ENCODE measurements at regions of chr3 and their contacts with region 1.

Region 1: DNA sequence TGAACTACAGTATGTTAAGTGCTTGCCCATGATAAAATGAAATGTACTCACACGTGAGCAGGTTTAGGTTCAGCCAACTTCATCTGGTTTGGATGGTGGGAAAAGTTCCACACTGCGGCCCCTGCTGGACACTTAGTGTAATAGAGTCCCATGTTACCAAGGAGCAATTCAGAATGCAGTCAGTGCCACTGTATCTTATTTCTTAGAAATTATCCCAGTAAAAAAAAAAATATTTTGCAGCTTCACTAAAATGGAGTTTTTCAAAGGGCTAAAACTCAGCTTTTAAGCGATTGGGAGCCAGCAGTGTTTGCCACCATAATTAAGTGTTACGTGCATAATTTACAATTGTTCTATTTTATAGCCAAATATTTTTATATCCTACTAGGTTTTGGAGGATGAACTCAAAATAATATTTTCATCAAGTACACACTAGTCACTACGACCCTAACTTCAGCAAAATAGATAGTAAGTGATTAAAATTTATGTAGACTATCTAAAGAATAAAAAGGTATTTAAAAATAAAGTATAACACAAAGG is 371.7 kb upstream of the GBE1 start:
- DNase-seq: peak; percentile 58 to 83
- ATAC-seq: peak; percentile 86
- H3K4me3 ChIP-seq: no peak overlapping the region
- H3K27ac ChIP-seq: no peak overlapping the region
- H3K4me1 ChIP-seq: no peaks in the 10 kb centered on the region
- H3K27me3 ChIP-seq: no peaks in the 10 kb centered on the region

Region 2: DNA sequence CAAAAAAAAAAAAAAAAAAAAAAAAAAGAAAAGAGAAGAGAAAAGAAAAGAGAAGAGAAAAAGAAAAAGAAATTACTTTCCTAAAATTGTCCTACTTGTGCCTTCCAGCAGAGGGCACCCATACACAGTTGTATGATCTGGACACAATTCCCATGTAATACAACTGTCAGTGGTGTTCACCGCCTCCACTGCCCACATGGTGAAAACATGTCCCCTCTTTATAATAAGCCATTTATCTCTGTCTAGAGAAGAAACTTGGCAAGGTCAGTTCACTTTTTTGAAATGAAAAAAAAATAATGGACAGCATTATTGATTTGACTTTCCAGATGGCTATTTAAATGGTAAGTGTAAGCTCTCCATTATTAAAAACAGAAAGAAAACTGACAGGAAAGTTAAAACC is 831.1 kb before region 1 on chr3:
- intact Hi-C with region 1: loop called (anchors 5 to 10 kb)
- DNase-seq: no peak
- ATAC-seq: peak; percentile 70
- H3K4me3 ChIP-seq: no peak overlapping the region
- H3K27ac ChIP-seq: no peak overlapping the region
- H3K4me1 ChIP-seq: no peaks in the 10 kb centered on the region
- H3K27me3 ChIP-seq: no peaks in the 10 kb centered on the region

Region 3: GRCh38 chr3:81419228-81419627 is 713.9 kb before region 1 on chr3:
- intact Hi-C with region 1: loop called in 1 of 2 experiments (anchors 10 kb)
- DNase-seq: no peak
- ATAC-seq: no peak
- H3K4me3 ChIP-seq: no peak overlapping the region
- H3K27ac ChIP-seq: no peak overlapping the region
- H3K4me1 ChIP-seq: no peaks in the 10 kb centered on the region
- H3K27me3 ChIP-seq: no peaks in the 10 kb centered on the region

Region 4: GRCh38 chr3:81666493-81667121 is 466.5 kb before region 1 on chr3:
- intact Hi-C with region 1: loop called (anchors 5 to 10 kb)
- DNase-seq: no peak
- ATAC-seq: no peak
- H3K4me3 ChIP-seq: no peak overlapping the region
- H3K27ac ChIP-seq: no peak overlapping the region
- H3K4me1 ChIP-seq: no peaks in the 10 kb centered on the region
- H3K27me3 ChIP-seq: no peaks in the 10 kb centered on the region

Region 5: GRCh38 chr3:82281205-82281604 is 148.1 kb after region 1 on chr3:
- intact Hi-C with region 1: no loop called
- DNase-seq: no peak
- ATAC-seq: no peak
- H3K4me3 ChIP-seq: no peak overlapping the region
- H3K27ac ChIP-seq: no peak overlapping the region
- H3K4me1 ChIP-seq: no peaks in the 10 kb centered on the region
- H3K27me3 ChIP-seq: no peaks in the 10 kb centered on the region